ENCODE measurements at regions of chr6 and their contacts with region 1.

Region 1: DNA sequence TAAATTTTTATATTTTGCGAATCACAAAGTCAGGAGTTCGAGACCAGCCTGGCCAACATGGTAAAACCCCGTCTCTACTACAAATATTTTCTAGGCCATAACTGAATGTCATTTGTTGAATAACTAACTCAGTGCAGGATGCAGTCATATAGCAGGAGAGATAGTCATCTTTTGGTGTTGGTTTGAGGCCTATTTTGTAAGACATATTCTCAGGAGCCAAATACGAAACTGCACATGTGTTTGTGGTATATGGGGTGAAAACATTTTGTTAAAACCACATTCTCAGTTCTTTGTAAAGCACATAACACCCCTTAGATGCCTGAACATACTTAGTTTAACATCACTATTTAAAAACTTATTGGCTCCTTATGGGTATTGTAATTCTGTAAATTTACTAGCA is 4.7 kb upstream of the ENPP5 start:
- DNase-seq: peak; percentile 12
- H3K4me3 Mint-ChIP-seq: no peak overlapping the region
- H3K27ac Mint-ChIP-seq: no peak overlapping the region
- H3K4me1 Mint-ChIP-seq: peaks cover 18% of the 10 kb centered on the region
- H3K27me3 Mint-ChIP-seq: peaks cover 84% of the 10 kb centered on the region

Region 2: DNA sequence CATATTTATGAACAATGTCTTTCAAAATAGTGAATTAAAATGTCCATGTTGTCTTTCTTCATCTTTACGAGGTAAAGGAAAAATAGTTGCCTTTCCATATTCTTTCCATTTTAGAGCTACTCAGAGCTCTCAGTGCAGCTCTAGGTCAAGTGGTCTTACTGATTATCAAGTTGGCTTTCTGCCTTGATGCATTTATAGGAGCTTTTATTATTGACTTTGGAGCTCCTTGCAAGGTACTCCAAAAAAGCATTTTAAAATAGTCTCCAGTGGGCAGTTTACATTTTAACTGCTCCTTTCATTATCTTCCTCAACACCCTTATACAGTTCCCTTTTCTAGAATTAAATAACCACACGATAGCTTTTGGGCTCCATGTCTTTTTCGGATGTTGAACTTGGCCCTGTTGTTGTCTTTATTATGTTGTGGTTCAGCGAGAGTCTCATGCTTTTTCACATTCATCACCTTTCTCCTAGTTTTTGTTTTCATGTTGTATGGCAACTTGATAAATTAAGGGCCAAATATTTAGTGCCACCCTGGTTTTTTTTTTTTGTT is 282.7 kb before region 1 on chr6:
- intact Hi-C with region 1: no loop called
- DNase-seq: no peak
- H3K4me3 Mint-ChIP-seq: no peak overlapping the region
- H3K27ac Mint-ChIP-seq: no peak overlapping the region
- H3K4me1 Mint-ChIP-seq: peaks cover 19% of the 10 kb centered on the region
- H3K27me3 Mint-ChIP-seq: peaks cover 1% of the 10 kb centered on the region

Region 3: DNA sequence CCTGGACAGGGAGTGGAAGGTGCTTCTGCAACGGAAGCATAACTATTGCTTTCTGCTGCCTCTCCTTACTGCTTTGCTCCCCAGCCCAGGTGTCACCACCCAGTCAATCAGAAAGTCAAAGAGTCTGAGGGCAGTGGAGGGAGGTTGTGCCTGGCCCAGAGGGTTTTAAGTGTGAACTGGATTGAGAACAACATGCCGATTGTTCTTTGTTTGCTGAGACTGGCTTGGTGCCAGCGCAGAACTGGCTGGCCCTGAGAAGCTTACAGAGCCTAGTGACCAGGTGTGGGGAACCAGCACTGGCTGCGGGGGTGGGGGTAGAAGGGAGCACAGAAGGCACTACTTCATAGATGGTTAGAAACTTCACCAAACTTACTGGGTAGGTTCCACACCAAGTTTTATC is 76.8 kb before region 1 on chr6:
- intact Hi-C with region 1: no loop called
- DNase-seq: no peak
- H3K4me3 Mint-ChIP-seq: no peak overlapping the region
- H3K27ac Mint-ChIP-seq: no peak overlapping the region
- H3K4me1 Mint-ChIP-seq: no peaks in the 10 kb centered on the region
- H3K27me3 Mint-ChIP-seq: peaks cover 4% of the 10 kb centered on the region

Region 4: DNA sequence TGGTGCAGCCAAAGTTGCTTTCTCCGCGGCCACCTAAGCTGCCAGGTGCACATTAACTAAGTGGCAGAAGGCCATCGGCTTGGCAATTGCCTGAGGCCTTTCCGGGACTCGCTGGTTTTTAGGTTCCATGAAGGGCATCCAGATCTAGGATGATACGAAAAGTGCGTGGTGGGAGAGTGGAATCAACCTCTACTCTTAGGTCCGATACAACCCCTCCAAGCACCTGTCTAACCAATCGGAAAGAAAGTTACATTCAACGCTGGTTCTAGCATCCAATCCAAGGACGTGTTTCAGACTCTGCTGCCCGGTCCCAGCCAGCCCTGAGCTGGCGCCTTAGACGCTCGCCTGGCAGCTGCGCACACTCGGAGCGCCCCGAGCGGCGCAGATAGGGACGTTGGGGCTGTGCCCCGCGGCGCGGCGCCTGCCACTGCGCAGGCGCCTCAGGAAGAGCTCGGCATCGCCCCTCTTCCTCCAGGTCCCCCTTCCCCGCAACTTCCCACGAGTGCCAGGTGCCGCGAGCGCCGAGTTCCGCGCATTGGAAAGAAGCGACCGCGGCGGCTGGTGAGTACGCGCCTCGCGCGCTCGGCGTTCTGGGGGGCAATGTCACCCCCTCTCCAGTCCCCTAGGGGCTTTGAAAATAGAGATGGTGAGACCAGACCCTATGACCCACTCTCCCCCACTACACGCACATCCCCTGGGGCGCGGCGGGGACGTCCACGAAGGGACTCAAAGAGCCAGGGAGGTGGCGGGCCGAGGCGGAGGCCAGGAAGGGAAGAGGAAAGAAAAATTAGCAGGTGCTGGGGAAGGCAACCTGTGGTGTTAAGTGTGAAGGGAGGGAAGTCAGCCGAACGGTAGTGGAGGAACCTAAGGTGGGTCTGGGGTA is 45.6 kb before region 1 on chr6 and contains the start of gene ENPP4:
- intact Hi-C with region 1: loop called (anchors 5 kb)
- DNase-seq: peak; percentile 88
- H3K4me3 Mint-ChIP-seq: peak within 1 kb of the TSS; percentile 90
- H3K27ac Mint-ChIP-seq: peak within 1 kb of the TSS; percentile 51
- H3K4me1 Mint-ChIP-seq: peaks cover 18% of the 10 kb centered on the region
- H3K27me3 Mint-ChIP-seq: peaks cover 11% of the 10 kb centered on the region
- total RNA-seq, gene ENPP4: 5.4 TPM in 2 replicates

Region 5: DNA sequence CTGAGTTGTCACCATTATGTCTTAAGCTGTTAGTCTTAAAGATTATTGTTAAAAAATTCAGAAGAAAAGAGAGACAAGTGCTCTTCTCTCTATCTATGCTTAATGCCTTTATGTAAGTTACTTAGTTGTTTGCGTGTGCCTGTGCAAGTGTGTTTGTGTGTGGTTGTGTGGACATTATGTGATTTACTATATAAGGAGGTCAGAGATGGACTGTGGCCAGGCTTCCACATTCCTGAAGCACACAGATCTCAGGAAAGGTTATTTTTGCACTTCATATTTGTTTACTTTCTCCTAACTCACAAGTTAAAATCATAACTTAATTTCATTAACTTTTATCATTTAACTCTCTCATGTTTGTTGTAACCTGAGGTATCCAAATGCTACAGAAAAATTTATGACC is 31.2 kb before region 1 on chr6:
- intact Hi-C with region 1: no loop called
- DNase-seq: no peak
- H3K4me3 Mint-ChIP-seq: no peak overlapping the region
- H3K27ac Mint-ChIP-seq: no peak overlapping the region
- H3K4me1 Mint-ChIP-seq: no peaks in the 10 kb centered on the region
- H3K27me3 Mint-ChIP-seq: peaks cover 5% of the 10 kb centered on the region

Region 6: GRCh38 chr6:46220352-46221221 is 45.1 kb after region 1 on chr6:
- intact Hi-C with region 1: loop called (anchors 1 kb)
- DNase-seq: no peak
- H3K4me3 Mint-ChIP-seq: no peak overlapping the region
- H3K27ac Mint-ChIP-seq: peak overlapping the region; percentile 56
- H3K4me1 Mint-ChIP-seq: peaks cover 7% of the 10 kb centered on the region
- H3K27me3 Mint-ChIP-seq: peaks cover 19% of the 10 kb centered on the region

Measured in activated T-helper 2 cell treated with anti-CD3 and anti-CD28 coated beads, Interferon-gamma antibody, Interleukin-2, Interleukin-4, amounts not matched to agents 10 μg/mL and 5 μg/mL and 100 μg/mL, durations not matched to agents 14 hours and 24 hours and 36 hours (primary cell).